Naive thymus-derived CD8-positive, alpha-beta T cell (primary cell): ENCODE measurements at regions of chr15 and their contacts with region 1.

Region 1: GRCh38 chr15:75639709-75640482 is at the start of gene IMP3:
- DNase-seq: peak; percentile 84 to 95 (median 92)
- ATAC-seq: peak; percentile 89 to 91
- H3K4me3 Mint-ChIP-seq: peak within 1 kb of the TSS; percentile 89 to 96 (median 94)
- H3K27ac Mint-ChIP-seq: peak within 1 kb of the TSS; percentile 49 to 99 (median 96)
- H3K4me1 Mint-ChIP-seq: peaks cover 19 to 47% (median 45%) of the 10 kb centered on the region in 4 donors
- H3K27me3 Mint-ChIP-seq: no peaks in the 10 kb centered on the region
- polyA plus RNA-seq, gene IMP3: 199 to 256 (median 238) TPM

Region 2: DNA sequence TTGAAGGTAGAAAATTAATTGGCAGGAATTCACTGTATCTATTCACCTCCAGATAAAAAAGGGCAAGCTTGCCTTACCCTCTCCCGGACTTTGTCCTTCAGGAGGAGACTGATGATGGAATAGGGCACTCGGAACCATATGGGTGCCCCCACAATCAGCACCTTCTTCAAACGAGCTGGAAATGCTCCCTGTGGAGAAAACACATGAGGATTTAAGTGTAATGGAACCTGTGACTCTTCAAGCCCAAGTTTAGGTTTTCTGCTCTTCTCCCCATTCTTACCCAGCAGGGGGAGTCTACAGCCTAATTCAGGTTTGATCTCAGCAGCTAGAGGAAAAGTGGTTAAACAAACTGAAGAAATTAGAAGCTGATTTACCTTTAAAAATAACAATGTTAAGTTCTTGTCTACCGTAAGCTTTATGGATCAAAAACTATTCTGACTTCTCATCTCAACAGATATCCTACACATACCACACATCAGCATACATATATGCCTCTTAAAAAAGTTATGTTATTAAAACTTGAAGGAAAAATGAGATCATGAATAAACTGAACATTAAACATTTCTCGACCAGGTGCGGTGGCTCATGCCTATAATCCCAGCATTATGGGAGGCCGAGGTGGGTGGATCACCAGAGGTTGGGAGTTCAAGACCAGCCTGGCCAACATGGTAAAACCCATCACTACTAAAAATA is 130.9 kb before region 1 on chr15:
- POLR2A ChIA-PET with region 1: interaction called, 13 read pairs
- DNase-seq: peak in 6 of 10 donors; percentile 20 to 62 (median 38)
- ATAC-seq: peak; percentile 40 to 64
- H3K4me3 Mint-ChIP-seq: no peak overlapping the region
- H3K27ac Mint-ChIP-seq: peak overlapping the region in 5 of 10 donors; percentile 8 to 51 (median 21)
- H3K4me1 Mint-ChIP-seq: peaks cover 0 to 6% (median under 1%) of the 10 kb centered on the region in 4 donors
- H3K27me3 Mint-ChIP-seq: no peaks in the 10 kb centered on the region

Region 3: GRCh38 chr15:75578948-75579920 is 60.7 kb before region 1 on chr15 and contains the start of gene PTPN9:
- POLR2A ChIA-PET with region 1: interaction called, 15 read pairs
- DNase-seq: peak; percentile 33 to 82 (median 60)
- ATAC-seq: peak; percentile 80 to 84
- H3K4me3 Mint-ChIP-seq: peak within 1 kb of the TSS; percentile 91 to 96 (median 92)
- H3K27ac Mint-ChIP-seq: peak within 1 kb of the TSS; percentile 88 to 95 (median 92)
- H3K4me1 Mint-ChIP-seq: peaks cover 13 to 28% (median 22%) of the 10 kb centered on the region in 4 donors
- H3K27me3 Mint-ChIP-seq: no peaks in the 10 kb centered on the region
- polyA plus RNA-seq, gene PTPN9: 12.9 to 19.6 (median 18.2) TPM

Region 4: GRCh38 chr15:75606711-75607699 is 32.9 kb before region 1 on chr15:
- POLR2A ChIA-PET with region 1: interaction called, 23 read pairs
- DNase-seq: peak in 5 of 10 donors; percentile 20 to 57 (median 42)
- ATAC-seq: peak; percentile 76 to 85
- H3K4me3 Mint-ChIP-seq: peak overlapping the region; percentile 51 to 82 (median 76)
- H3K27ac Mint-ChIP-seq: peak overlapping the region; percentile 75 to 92 (median 88)
- H3K4me1 Mint-ChIP-seq: peaks cover 26 to 51% (median 44%) of the 10 kb centered on the region in 4 donors
- H3K27me3 Mint-ChIP-seq: no peaks in the 10 kb centered on the region

Region 5: GRCh38 chr15:75625542-75626347 is 14.2 kb before region 1 on chr15 and contains the start of gene SNUPN:
- POLR2A ChIA-PET with region 1: interaction called, 143 read pairs
- DNase-seq: peak; percentile 83 to 96 (median 90)
- ATAC-seq: peak; percentile 89 to 92
- H3K4me3 Mint-ChIP-seq: peak within 1 kb of the TSS; percentile 90 to 100 (median 96)
- H3K27ac Mint-ChIP-seq: peak within 1 kb of the TSS; percentile 91 to 100 (median 98)
- H3K4me1 Mint-ChIP-seq: peaks cover 16 to 39% (median 32%) of the 10 kb centered on the region in 4 donors
- H3K27me3 Mint-ChIP-seq: no peaks in the 10 kb centered on the region
- polyA plus RNA-seq, gene SNUPN: 20.1 to 33.7 (median 21.7) TPM

Region 6: DNA sequence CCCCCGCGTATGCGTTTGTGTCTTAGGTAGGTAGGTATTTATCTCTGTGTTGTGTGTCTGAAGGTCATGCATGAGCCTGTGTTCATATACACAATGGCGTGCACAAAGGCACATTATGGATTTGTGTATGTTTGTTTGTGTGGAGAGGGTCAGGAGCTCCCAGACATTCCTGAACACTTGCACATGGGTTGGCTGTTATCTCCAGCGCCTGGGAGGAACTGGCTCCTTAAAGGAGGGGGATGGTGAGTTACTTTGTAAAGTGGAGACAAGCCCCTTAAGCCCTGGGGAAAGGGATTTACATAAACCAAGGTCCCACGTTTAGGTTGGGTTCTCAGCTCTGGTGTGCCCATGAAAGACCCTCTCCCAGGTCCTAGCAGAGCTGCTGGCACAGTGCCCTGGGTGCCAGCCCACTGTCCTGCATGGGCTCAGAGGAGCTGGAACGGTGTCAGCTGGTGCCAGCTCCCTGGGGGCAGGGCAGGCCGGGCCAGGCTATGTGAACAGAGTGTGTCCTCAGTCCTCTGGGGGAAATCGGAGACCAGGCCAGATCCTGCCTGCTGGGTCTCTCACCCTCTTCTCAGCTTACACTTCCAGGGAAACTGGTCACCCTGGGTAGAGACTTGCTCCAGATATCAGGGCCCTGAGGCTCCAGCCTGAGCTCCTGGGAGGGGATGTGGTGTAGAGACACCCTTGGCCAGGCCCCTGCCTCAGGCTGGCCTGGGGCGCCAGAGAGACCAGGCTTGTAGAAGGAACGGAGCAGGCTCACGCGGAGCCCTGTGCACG is 32.9 kb after region 1 on chr15:
- POLR2A ChIA-PET with region 1: no interaction called
- DNase-seq: no peak
- ATAC-seq: no peak
- H3K4me3 Mint-ChIP-seq: no peak overlapping the region
- H3K27ac Mint-ChIP-seq: no peak overlapping the region
- H3K4me1 Mint-ChIP-seq: no peaks in the 10 kb centered on the region
- H3K27me3 Mint-ChIP-seq: no peaks in the 10 kb centered on the region

Region 7: DNA sequence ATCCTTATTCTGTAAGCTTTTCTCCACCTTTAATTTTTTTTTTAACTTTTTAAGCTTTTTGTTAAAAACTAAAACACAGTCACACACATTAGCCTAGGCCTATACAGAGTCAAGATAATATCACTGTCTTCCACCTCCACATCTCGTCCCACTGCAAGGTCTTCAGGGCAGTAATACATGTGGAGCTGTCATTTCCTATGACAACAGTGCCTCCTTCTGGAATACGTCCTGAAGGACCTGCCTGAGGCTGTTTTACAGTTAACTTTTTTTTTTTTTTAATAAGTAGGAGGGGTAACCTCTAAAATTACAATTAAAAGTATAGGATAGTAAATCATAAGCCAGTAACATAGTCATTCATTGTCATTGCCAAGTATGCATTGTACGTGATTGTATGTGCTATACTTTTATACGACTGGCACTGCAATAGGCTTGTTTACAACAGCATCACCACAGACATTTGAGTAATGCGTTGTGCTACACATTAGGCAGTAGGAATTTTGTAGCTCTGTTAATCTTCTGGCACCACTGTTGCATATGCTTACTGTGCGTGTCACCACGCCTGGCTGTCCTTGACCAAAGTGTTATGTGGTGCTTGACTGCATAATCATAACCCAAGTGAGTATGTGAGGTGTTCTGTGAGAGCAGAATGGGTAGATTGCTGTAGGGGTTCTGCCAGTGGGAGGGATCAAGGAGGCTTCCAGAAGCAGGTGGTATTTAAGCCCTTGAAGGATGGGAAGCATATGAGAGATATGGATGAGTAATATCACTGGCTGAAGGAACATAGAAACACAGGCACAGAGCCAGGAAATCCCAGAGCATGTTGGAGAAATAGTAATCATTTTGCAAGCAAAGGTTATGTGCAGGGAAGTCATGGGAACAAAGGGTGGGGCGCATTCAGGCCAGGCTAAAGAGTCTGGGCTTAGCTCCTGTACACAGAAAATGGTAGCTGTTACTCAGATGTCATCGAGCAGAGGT is 282.1 kb after region 1 on chr15:
- POLR2A ChIA-PET with region 1: no interaction called
- DNase-seq: peak in 2 of 10 donors; percentile 17 to 23
- ATAC-seq: peak in 1 of 2 donors; percentile 44
- H3K4me3 Mint-ChIP-seq: no peak overlapping the region
- H3K27ac Mint-ChIP-seq: peak overlapping the region in 2 of 10 donors; percentile 44 to 61
- H3K4me1 Mint-ChIP-seq: peaks cover 25 to 37% (median 30%) of the 10 kb centered on the region in 4 donors
- H3K27me3 Mint-ChIP-seq: no peaks in the 10 kb centered on the region